Mammary epithelial cell (primary cell): ENCODE measurements at regions of chr11 and their contacts with region 1.

Region 1: DNA sequence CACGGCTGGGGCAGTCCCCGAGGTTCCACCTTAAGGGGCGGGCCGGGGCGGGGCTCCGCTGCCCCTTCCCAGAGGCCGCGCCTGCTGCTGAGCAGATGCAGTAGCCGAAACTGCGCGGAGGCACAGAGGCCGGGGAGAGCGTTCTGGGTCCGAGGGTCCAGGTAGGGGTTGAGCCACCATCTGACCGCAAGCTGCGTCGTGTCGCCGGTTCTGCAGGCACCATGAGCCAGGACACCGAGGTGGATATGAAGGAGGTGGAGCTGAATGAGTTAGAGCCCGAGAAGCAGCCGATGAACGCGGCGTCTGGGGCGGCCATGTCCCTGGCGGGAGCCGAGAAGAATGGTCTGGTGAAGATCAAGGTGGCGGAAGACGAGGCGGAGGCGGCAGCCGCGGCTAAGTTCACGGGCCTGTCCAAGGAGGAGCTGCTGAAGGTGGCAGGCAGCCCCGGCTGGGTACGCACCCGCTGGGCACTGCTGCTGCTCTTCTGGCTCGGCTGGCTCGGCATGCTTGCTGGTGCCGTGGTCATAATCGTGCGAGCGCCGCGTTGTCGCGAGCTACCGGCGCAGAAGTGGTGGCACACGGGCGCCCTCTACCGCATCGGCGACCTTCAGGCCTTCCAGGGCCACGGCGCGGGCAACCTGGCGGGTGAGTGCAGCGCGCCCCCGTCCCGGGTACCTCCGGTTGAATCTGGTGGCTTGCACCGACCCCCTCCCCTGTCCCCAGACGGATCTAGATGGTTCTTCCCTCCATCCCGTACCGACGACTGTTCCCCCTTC is at the start of gene SLC3A2:
- DNase-seq: peak; percentile 88
- H3K4me3 ChIP-seq: peak within 1 kb of the TSS; percentile 90 to 96 (median 91)
- H3K27ac ChIP-seq: peak within 1 kb of the TSS; percentile 99
- H3K4me1 ChIP-seq: peaks cover 41% of the 10 kb centered on the region
- H3K27me3 ChIP-seq: no peaks in the 10 kb centered on the region
- CTCF ChIP-seq: peak; percentile 32 to 72
- total RNA-seq, gene SLC3A2: 1,418 to 1,465 TPM

Region 2: GRCh38 chr11:62678770-62679696 is 202.0 kb before region 1 on chr11 and contains the start of gene UBXN1:
- CTCF ChIA-PET with region 1: no interaction called
- dilution Hi-C with region 1: no loop called
- in situ Hi-C with region 1: no loop called
- intact Hi-C with region 1: no loop called
- DNase-seq: peak; percentile 83
- H3K4me3 ChIP-seq: peak within 1 kb of the TSS; percentile 85 to 96 (median 86)
- H3K27ac ChIP-seq: peak within 1 kb of the TSS; percentile 77
- H3K4me1 ChIP-seq: peaks cover 15% of the 10 kb centered on the region
- H3K27me3 ChIP-seq: no peaks in the 10 kb centered on the region
- CTCF ChIP-seq: no peak
- total RNA-seq, gene UBXN1: 63.7 to 93.1 TPM

Region 3: DNA sequence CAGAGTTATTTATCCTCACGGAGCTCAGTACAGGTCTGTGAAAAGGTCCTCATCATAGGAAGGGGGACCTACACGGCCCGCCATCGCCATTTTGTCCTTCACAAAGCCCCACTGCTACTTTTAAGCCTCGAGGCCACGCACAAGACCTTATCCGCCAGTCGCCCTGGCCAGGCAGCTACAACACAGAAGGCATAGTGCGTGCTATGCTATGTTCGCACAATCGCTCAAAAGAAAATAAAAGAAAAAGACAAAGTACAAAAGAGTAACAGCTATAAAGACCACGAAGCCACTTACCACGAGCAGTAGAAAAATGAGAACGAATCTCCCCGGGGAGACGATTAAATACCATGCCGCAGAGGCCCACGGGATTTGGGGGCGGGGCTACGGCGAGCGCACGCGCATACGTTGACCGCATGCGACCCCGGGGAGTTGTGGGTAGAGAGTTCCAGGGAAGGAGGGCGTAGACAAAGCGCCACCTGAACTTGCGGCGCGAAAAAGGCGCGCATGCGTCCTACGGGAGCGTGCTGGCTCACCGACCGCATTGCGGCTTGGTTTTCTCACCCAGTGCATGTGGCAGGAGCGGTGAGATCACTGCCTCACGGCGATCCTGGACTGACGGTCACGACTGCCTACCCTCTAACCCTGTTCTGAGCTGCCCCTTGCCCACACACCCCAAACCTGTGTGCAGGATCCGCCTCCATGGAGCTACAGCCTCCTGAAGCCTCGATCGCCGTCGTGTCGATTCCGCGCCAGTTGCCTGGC is 25.2 kb before region 1 on chr11:
- CTCF ChIA-PET with region 1: interaction called, 9 read pairs
- dilution Hi-C with region 1: no loop called
- in situ Hi-C with region 1: no loop called
- intact Hi-C with region 1: loop called (anchors 1 kb)
- DNase-seq: peak; percentile 98
- H3K4me3 ChIP-seq: peak overlapping the region; percentile 74 to 86 (median 84)
- H3K27ac ChIP-seq: peak overlapping the region; percentile 77
- H3K4me1 ChIP-seq: peaks cover 19% of the 10 kb centered on the region
- H3K27me3 ChIP-seq: no peaks in the 10 kb centered on the region
- CTCF ChIP-seq: no peak

Region 4: GRCh38 chr11:62860835-62861563 is 20.0 kb before region 1 on chr11:
- CTCF ChIA-PET with region 1: interaction called, 9 read pairs
- dilution Hi-C with region 1: no loop called
- in situ Hi-C with region 1: no loop called
- intact Hi-C with region 1: loop called (anchors 1 kb)
- DNase-seq: no peak
- H3K4me3 ChIP-seq: no peak overlapping the region
- H3K27ac ChIP-seq: no peak overlapping the region
- H3K4me1 ChIP-seq: peaks cover 7% of the 10 kb centered on the region
- H3K27me3 ChIP-seq: no peaks in the 10 kb centered on the region
- CTCF ChIP-seq: no peak

Region 5: DNA sequence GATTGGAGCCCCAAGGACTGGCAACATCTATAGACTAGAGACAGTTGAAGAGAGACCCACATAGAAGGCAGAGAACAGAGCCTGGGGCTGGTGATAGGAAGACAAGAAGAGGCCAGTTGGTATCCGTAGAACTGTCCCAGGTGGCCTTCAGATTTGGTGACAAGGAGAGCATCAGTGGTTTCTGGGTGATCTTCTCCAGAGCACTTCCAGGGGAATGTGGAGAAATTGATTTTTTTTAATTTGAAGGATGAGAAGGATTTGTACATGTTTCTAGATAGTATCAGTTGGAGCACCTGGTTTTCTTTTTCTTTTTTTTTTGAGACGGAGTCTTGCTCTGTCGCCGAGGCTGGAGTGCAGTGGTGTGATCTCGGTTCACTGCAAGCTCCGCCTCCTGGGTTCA is 14.5 kb after region 1 on chr11:
- CTCF ChIA-PET with region 1: no interaction called
- dilution Hi-C with region 1: no loop called
- in situ Hi-C with region 1: no loop called
- intact Hi-C with region 1: no loop called
- DNase-seq: no peak
- H3K4me3 ChIP-seq: no peak overlapping the region
- H3K27ac ChIP-seq: no peak overlapping the region
- H3K4me1 ChIP-seq: no peaks in the 10 kb centered on the region
- H3K27me3 ChIP-seq: no peaks in the 10 kb centered on the region
- CTCF ChIP-seq: no peak

Region 6: GRCh38 chr11:62948765-62949320 is 67.9 kb after region 1 on chr11:
- CTCF ChIA-PET with region 1: no interaction called
- dilution Hi-C with region 1: no loop called
- in situ Hi-C with region 1: no loop called
- intact Hi-C with region 1: no loop called
- DNase-seq: no peak
- H3K4me3 ChIP-seq: no peak overlapping the region
- H3K27ac ChIP-seq: no peak overlapping the region
- H3K4me1 ChIP-seq: no peaks in the 10 kb centered on the region
- H3K27me3 ChIP-seq: no peaks in the 10 kb centered on the region
- CTCF ChIP-seq: no peak